HepG2 (cell line): ENCODE measurements at regions of chr10 and their contacts with region 1.

Region 1: GRCh38 chr10:99620713-99621453 is 644 bp upstream of the SLC25A28 start:
- DNase-seq: peak; percentile 83
- ATAC-seq: peak; percentile 93
- H3K4me3 ChIP-seq: peak overlapping the region; percentile 72 to 79 (median 79)
- H3K27ac ChIP-seq: peak overlapping the region; percentile 95
- H3K4me1 ChIP-seq: peaks cover 41% of the 10 kb centered on the region
- H3K27me3 ChIP-seq: no peaks in the 10 kb centered on the region; a peak in 1 of 5 replicates
- CTCF ChIP-seq: no peak
- EP300 ChIP-seq: peak; percentile 3 to 20; a peak in 1 of 4 replicates
- POLR2A ChIP-seq: peak; percentile 70 to 80
- RAD21 ChIP-seq: 0 out of 2 replicates have a peak, but pooled peaks have one; percentile 11

Region 2: DNA sequence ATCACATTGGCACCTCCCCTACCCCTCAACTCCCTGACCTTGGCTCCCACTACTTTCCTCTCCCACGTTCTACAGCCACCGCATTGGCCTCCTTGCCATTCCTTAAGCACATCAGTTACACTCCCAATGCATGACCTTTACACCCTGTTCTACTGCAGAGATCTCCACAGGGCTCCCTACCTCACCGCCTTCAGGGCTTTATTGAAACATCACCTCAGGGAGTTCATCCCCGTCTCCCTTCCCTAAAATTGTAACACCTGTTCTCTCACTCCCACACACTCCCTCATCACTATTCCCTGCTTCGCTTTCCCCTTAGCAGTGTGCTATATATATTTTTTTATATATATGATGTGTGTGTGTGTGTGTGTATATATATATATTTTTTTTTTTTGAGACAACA is 273.2 kb before region 1 on chr10:
- CTCF ChIA-PET with region 1: no interaction called
- POLR2A ChIA-PET with region 1: no interaction called
- in situ Hi-C with region 1: no loop called
- intact Hi-C with region 1: no loop called
- DNase-seq: no peak
- ATAC-seq: no peak
- H3K4me3 ChIP-seq: no peak overlapping the region
- H3K27ac ChIP-seq: no peak overlapping the region
- H3K4me1 ChIP-seq: no peaks in the 10 kb centered on the region
- H3K27me3 ChIP-seq: no peaks in the 10 kb centered on the region
- CTCF ChIP-seq: no peak
- EP300 ChIP-seq: no peak
- POLR2A ChIP-seq: no peak
- RAD21 ChIP-seq: no peak

Region 3: DNA sequence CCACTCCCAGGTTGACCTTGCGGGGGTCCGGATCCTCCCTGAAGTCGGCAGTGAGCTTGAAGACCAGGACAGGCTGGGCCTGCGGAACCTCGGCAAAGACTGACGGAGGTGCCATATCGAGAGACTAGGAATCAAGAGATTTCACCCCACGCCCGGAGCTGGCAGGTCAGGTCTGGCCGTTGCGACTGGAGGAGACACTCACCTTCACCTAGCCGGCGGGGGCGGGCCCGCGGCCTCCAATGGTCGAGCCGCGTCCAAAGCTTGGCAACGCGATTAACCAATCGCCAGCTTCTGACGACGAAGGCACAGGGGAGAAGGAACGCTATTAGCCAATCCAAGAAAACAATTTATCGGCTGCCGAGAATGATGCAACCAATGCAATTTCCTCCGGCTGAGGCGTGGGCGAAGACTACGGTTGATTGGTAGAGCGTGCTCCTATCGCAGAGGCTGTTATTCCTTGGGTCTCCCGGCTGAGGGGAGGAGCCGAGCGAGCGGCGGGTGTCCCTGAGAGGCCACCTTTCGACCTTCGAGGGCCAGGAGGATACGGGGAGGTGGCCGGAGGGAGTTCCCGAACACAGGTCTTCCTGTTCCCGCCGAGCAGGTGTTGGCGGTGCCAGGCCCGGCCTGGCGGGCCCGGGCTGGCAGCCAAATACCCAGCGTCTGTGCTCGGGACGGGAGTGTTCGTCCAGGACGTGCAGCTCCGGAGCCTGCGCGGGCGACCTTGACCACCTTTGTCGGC is 190.3 kb before region 1 on chr10 and contains the start of gene GOT1:
- CTCF ChIA-PET with region 1: no interaction called
- POLR2A ChIA-PET with region 1: interaction called, 36 read pairs
- in situ Hi-C with region 1: no loop called
- intact Hi-C with region 1: no loop called
- DNase-seq: peak; percentile 99
- ATAC-seq: peak; percentile 97
- H3K4me3 ChIP-seq: peak within 1 kb of the TSS; percentile 87 to 99 (median 93)
- H3K27ac ChIP-seq: peak within 1 kb of the TSS; percentile 75
- H3K4me1 ChIP-seq: peaks cover 55% of the 10 kb centered on the region
- H3K27me3 ChIP-seq: no peaks in the 10 kb centered on the region; a peak in 1 of 5 replicates
- CTCF ChIP-seq: no peak
- EP300 ChIP-seq: peak in 1 of 2 experiments; percentile 69; a peak in 1 of 4 replicates
- POLR2A ChIP-seq: peak; percentile 80 to 92
- RAD21 ChIP-seq: peak; percentile 55
- total RNA-seq, gene GOT1: 102 and 138 TPM in 2 replicates

Region 4: DNA sequence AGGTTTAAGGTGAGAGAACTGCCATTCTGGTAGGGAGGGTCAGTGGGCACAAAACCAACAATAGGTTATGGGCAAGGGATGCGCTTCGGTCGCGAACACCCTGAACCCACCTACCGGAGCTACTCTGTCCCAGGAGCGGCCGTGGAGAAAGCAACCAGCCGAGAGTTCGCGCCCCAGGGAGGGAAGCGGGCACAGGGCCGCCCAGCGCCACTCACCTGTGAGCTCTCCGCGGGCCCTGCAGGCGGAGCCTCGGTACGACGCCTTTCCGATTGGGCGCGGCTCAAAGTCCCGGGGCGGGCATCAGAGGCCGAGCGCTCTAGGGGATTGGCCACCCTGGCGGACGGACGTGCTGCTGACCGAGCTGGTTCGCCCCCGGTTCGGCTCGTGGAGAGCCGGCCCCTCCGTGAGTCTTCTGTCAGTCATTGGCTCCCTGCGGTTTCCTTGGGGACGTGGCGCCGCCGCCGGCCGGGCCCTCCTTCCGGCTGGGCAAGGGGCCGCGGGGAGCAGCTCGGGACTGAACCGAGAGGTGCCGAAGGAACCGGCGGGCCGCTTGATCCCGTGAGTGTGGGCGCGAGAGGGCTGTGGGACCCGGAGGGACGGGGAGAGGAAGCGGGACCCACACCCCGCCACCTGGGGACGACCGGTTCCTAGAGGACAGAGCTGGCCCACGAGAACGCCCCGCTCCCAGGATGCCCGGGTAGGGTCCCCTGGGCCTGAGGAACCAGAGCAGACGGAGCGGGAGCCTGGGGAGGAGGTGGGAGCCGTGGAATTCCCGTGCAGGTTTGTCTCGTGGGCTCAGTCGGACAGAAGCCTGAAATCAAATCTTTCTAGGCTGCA is 38.4 kb after region 1 on chr10 and contains the start of gene ENTPD7:
- CTCF ChIA-PET with region 1: no interaction called
- POLR2A ChIA-PET with region 1: interaction called, 63 read pairs
- in situ Hi-C with region 1: no loop called
- intact Hi-C with region 1: loop called (anchors 2 kb)
- DNase-seq: peak; percentile 93
- ATAC-seq: peak; percentile 98
- H3K4me3 ChIP-seq: peak within 1 kb of the TSS; percentile 93 to 95 (median 93)
- H3K27ac ChIP-seq: peak within 1 kb of the TSS; percentile 81
- H3K4me1 ChIP-seq: peaks cover 49% of the 10 kb centered on the region
- H3K27me3 ChIP-seq: no peaks in the 10 kb centered on the region; a peak in 1 of 5 replicates
- CTCF ChIP-seq: peak; percentile 33
- EP300 ChIP-seq: no peak
- POLR2A ChIP-seq: peak; percentile 86 to 89
- RAD21 ChIP-seq: peak; percentile 27
- total RNA-seq, gene ENTPD7: 35.5 and 36.5 TPM in 2 replicates

Region 5: DNA sequence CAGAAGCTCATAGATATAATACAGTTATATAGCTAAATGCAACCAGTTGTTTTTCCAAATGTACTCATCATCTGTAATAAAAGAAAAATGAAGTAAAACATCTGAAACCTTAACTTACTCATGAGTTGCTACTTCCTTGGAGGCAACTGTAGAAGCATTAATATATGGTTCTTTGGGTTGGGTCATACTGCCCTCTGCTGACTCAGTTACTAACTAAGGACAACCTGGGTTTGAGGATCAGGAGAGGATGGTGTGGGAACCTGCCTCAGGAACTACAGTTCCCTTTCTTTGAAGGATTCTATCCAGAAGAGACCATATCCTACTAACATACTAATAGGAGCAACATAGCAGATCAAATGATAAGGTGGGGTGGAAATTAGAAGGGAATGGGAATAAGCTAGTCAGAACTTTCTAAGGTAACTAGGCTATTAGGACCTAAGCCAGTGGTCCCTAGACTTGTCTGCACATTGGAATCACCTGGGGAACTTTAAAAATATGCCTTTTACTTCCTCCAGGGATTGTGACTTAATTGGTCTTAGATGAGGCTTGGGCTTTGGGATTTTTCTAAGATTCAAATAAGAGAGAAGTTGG is 90.3 kb after region 1 on chr10:
- CTCF ChIA-PET with region 1: no interaction called
- POLR2A ChIA-PET with region 1: no interaction called
- in situ Hi-C with region 1: loop called (anchors 10 kb)
- intact Hi-C with region 1: no loop called
- DNase-seq: peak; percentile 51
- ATAC-seq: peak; percentile 92
- H3K4me3 ChIP-seq: no peak overlapping the region
- H3K27ac ChIP-seq: no peak overlapping the region
- H3K4me1 ChIP-seq: no peaks in the 10 kb centered on the region
- H3K27me3 ChIP-seq: no peaks in the 10 kb centered on the region
- CTCF ChIP-seq: peak; percentile 78
- EP300 ChIP-seq: no peak
- POLR2A ChIP-seq: no peak
- RAD21 ChIP-seq: no peak

Region 6: GRCh38 chr10:100009793-100010676 is 389.2 kb after region 1 on chr10 and contains the start of gene DNMBP:
- CTCF ChIA-PET with region 1: no interaction called
- POLR2A ChIA-PET with region 1: no interaction called
- in situ Hi-C with region 1: no loop called
- intact Hi-C with region 1: loop called (anchors 5 kb)
- DNase-seq: peak; percentile 61
- ATAC-seq: peak; percentile 91
- H3K4me3 ChIP-seq: peak within 1 kb of the TSS; percentile 87 to 93 (median 93)
- H3K27ac ChIP-seq: peak within 1 kb of the TSS; percentile 60
- H3K4me1 ChIP-seq: peaks cover 83% of the 10 kb centered on the region
- H3K27me3 ChIP-seq: no peaks in the 10 kb centered on the region; a peak in 1 of 5 replicates
- CTCF ChIP-seq: peak; percentile 68
- EP300 ChIP-seq: no peak
- POLR2A ChIP-seq: peak in 1 of 2 experiments; percentile 55; a peak in 1 of 4 replicates
- RAD21 ChIP-seq: peak; percentile 74
- total RNA-seq, gene DNMBP: 6.3 and 6.4 TPM in 2 replicates